ENCODE measurements at regions of chr15 and their contacts with region 1.

Region 1: GRCh38 chr15:81480645-81481053 is 106.6 kb upstream of the TMC3 start:
- DNase-seq: peak in 4 of 9 experiments; percentile 47 to 61 (median 54)
- ATAC-seq: peak; percentile 23
- H3K4me3 ChIP-seq: no peak overlapping the region
- H3K4me3 Mint-ChIP-seq: peak overlapping the region; percentile 42
- H3K27ac ChIP-seq: no peak overlapping the region
- H3K27ac Mint-ChIP-seq: no peak overlapping the region
- H3K4me1 ChIP-seq: no peaks in the 10 kb centered on the region
- H3K4me1 Mint-ChIP-seq: no peaks in the 10 kb centered on the region
- H3K27me3 ChIP-seq: no peaks in the 10 kb centered on the region
- H3K27me3 Mint-ChIP-seq: no peaks in the 10 kb centered on the region
- CTCF ChIP-seq: peak; percentile 86

Region 2: GRCh38 chr15:81323944-81324881 is 156.4 kb before region 1 on chr15 and contains the start of gene STARD5:
- CTCF ChIA-PET with region 1: no interaction called
- POLR2A ChIA-PET with region 1: no interaction called
- intact Hi-C with region 1: no loop called
- DNase-seq: peak; percentile 85 to 97 (median 96)
- ATAC-seq: peak; percentile 96
- H3K4me3 ChIP-seq: peak within 1 kb of the TSS; percentile 82 to 93
- H3K4me3 Mint-ChIP-seq: peak within 1 kb of the TSS; percentile 95
- H3K27ac ChIP-seq: peak within 1 kb of the TSS; percentile 54 to 60
- H3K27ac Mint-ChIP-seq: peak within 1 kb of the TSS; percentile 93
- H3K4me1 ChIP-seq: peaks cover 27% of the 10 kb centered on the region
- H3K4me1 Mint-ChIP-seq: peaks cover 41% of the 10 kb centered on the region
- H3K27me3 ChIP-seq: no peaks in the 10 kb centered on the region
- H3K27me3 Mint-ChIP-seq: no peaks in the 10 kb centered on the region
- CTCF ChIP-seq: no peak
- total RNA-seq, gene STARD5: 13.6 to 14.3 TPM

Region 3: GRCh38 chr15:81469154-81469553 is 11.5 kb before region 1 on chr15:
- CTCF ChIA-PET with region 1: interaction called, 23 read pairs
- POLR2A ChIA-PET with region 1: no interaction called
- intact Hi-C with region 1: no loop called
- DNase-seq: no peak
- ATAC-seq: no peak
- H3K4me3 ChIP-seq: no peak overlapping the region
- H3K4me3 Mint-ChIP-seq: no peak overlapping the region
- H3K27ac ChIP-seq: no peak overlapping the region
- H3K27ac Mint-ChIP-seq: no peak overlapping the region
- H3K4me1 ChIP-seq: no peaks in the 10 kb centered on the region
- H3K4me1 Mint-ChIP-seq: no peaks in the 10 kb centered on the region
- H3K27me3 ChIP-seq: peaks cover 4 to 5% of the 10 kb centered on the region in 2 experiments
- H3K27me3 Mint-ChIP-seq: peaks cover 17% of the 10 kb centered on the region
- CTCF ChIP-seq: no peak

Region 4: DNA sequence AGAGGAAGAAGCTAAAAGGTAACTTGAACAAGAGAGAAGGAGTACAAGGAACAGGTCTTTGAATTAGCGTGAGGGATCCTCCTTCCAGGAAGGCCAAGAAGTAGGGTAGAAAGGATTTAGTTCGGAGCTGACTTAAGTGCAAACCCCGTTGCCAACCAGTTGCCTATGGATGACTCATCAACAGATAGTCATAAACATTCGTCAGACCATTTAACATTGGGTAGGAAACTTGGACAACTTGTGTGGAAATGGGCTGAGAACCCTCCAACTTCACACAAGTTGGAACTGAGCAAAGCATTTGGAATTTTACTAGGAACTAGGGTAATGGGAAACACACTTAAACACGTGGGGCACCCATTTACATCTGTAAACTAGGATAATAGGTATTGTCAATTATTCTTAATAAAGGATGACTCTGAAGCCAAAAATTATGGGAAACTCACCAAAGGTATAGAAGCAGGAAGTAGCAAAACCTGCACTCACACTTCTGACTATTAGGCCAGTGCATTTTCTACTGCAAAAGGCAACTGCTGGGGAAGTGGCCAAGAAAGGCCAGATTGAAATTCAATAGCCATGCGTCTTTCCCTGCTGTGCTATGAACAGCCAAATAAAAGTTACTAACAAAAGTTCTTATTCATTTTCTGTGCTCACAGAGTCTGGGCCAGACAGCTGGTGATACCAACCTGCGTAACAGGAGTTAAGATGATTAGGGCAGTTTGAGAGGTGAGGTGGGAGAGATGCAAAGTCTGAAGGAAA is 67.9 kb after region 1 on chr15:
- CTCF ChIA-PET with region 1: no interaction called
- POLR2A ChIA-PET with region 1: no interaction called
- intact Hi-C with region 1: no loop called
- DNase-seq: no peak
- ATAC-seq: no peak
- H3K4me3 ChIP-seq: no peak overlapping the region
- H3K4me3 Mint-ChIP-seq: no peak overlapping the region
- H3K27ac ChIP-seq: no peak overlapping the region
- H3K27ac Mint-ChIP-seq: no peak overlapping the region
- H3K4me1 ChIP-seq: no peaks in the 10 kb centered on the region
- H3K4me1 Mint-ChIP-seq: no peaks in the 10 kb centered on the region
- H3K27me3 ChIP-seq: no peaks in the 10 kb centered on the region
- H3K27me3 Mint-ChIP-seq: peaks cover 2% of the 10 kb centered on the region
- CTCF ChIP-seq: no peak

Region 5: DNA sequence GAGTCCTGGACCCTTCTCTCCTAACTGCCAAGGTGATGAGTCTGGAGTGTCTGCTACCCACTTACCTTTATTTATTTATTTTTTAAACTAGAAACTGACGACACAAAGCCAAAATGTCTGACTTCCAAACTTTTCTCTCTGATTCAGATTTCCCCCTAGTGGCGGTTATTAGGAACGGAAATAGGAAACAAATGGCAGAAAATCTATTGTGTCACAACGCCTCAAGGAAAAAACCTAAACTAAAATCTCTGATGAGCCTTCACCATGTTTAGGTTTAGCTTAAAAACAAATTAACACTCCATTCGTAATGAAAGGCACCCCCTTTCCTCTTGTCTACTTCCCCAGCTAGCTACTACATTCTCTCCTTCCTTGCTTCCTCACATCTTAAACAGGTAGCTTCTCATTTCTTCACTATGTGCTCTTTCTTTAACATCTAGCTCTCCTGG is 659.2 kb after region 1 on chr15:
- CTCF ChIA-PET with region 1: interaction called, 11 read pairs
- POLR2A ChIA-PET with region 1: interaction called, 3 read pairs
- intact Hi-C with region 1: loop called in 1 of 2 experiments (anchors 2 kb)
- DNase-seq: peak in 2 of 9 experiments; percentile 20 to 40
- ATAC-seq: no peak
- H3K4me3 ChIP-seq: no peak overlapping the region
- H3K4me3 Mint-ChIP-seq: no peak overlapping the region
- H3K27ac ChIP-seq: no peak overlapping the region
- H3K27ac Mint-ChIP-seq: no peak overlapping the region
- H3K4me1 ChIP-seq: no peaks in the 10 kb centered on the region
- H3K4me1 Mint-ChIP-seq: peaks cover 6% of the 10 kb centered on the region
- H3K27me3 ChIP-seq: no peaks in the 10 kb centered on the region
- H3K27me3 Mint-ChIP-seq: no peaks in the 10 kb centered on the region
- CTCF ChIP-seq: peak; percentile 63

Measured in CD8-positive, alpha-beta T cell (primary cell).